ENCODE measurements at regions of chr14 and their contacts with region 1.

Region 1: GRCh38 chr14:57502586-57503254 is 9.1 kb upstream of the CCDC198 start:
- DNase-seq: peak; percentile 42
- H3K4me3 Mint-ChIP-seq: no peak overlapping the region
- H3K27ac Mint-ChIP-seq: no peak overlapping the region
- H3K4me1 Mint-ChIP-seq: peaks cover 20% of the 10 kb centered on the region
- H3K27me3 Mint-ChIP-seq: peaks cover 9% of the 10 kb centered on the region
- CTCF ChIP-seq: no peak

Region 2: GRCh38 chr14:57486767-57487379 is 15.8 kb before region 1 on chr14:
- CTCF ChIA-PET with region 1: interaction called, 11 read pairs
- POLR2A ChIA-PET with region 1: interaction called, 3 read pairs
- intact Hi-C with region 1: no loop called
- DNase-seq: peak; percentile 64
- H3K4me3 Mint-ChIP-seq: no peak overlapping the region
- H3K27ac Mint-ChIP-seq: no peak overlapping the region
- H3K4me1 Mint-ChIP-seq: no peaks in the 10 kb centered on the region
- H3K27me3 Mint-ChIP-seq: no peaks in the 10 kb centered on the region
- CTCF ChIP-seq: peak; percentile 62

Measured in MCF 10A (cell line).